ENCODE measurements at regions of chr3 and their contacts with region 1.

Region 1: DNA sequence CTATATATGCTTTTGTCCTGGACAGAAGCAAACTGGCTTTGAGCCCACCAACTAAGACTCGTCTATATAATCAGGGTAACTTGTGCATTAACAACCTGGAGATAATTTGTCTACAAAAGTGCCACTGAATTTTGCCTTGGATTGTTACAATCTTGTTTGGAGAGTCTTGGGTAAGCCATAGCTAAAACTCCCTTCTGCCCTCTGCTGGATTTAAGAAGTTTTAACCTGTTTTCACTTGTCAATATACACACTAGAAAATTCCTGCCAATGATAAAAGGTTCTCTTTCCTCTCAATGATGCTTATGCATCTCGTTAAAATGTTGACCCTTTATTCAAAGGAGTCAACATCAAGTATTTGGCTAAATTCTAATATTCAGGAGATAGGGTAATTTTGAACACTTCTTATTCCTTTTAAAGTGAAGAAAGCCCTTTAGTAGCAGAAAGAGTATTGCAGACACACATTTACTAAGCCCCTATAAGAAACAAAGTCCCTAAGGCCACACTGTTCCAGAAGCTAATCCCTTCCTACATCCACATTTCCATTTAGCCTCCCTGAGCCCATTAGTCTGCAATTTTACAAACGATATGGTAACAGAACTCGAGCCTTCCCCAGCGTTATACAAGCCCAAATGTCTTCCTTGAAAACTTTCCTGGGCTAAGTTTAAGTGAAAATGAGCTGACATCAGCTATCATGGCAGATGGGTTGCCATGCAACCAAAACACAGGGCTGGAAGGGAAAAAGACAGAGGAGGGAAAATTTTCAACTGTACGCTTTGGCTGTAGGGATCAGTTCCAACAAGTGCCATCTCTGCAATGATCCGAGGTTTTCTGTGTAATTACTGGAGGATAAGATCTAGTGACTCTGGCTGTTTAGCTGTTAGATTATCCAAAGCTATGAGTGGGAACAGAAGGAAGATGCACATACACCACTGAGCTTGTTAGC is 75.9 kb upstream of the FGF12 start:
- DNase-seq: peak; percentile 27
- ATAC-seq: peak; percentile 76
- H3K4me3 ChIP-seq: no peak overlapping the region
- H3K27ac ChIP-seq: no peak overlapping the region
- H3K4me1 ChIP-seq: no peaks in the 10 kb centered on the region
- H3K27me3 ChIP-seq: no peaks in the 10 kb centered on the region
- CTCF ChIP-seq: peak; percentile 62
- EP300 ChIP-seq: no peak
- POLR2A ChIP-seq: no peak
- RAD21 ChIP-seq: peak; percentile 28; the same call in 1 of the 2 replicates

Region 2: DNA sequence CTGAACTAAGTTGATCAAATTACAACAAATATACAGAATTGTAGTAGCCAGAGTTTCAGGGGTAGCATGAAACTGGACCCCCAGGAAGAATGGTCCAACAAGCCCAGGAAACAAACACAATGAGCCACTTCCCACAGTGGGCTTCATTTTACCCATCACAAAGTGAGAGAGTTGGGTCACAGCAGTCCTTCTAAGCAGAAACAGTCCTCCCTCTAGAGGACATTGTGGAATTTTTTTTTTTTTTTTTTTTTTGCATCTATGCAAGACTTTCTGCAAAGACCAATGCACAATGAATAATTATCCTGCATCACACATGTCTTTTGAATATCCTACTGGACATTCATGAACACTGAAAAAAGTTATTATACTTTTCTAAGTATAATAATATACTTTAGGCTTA is 649.1 kb after region 1 on chr3:
- CTCF ChIA-PET with region 1: no interaction called
- POLR2A ChIA-PET with region 1: no interaction called
- in situ Hi-C with region 1: loop called (anchors 25 kb)
- intact Hi-C with region 1: no loop called
- DNase-seq: no peak
- ATAC-seq: peak; percentile 41; the same call in 2 of the 3 replicates
- H3K4me3 ChIP-seq: no peak overlapping the region
- H3K27ac ChIP-seq: no peak overlapping the region
- H3K4me1 ChIP-seq: no peaks in the 10 kb centered on the region
- H3K27me3 ChIP-seq: no peaks in the 10 kb centered on the region
- CTCF ChIP-seq: 0 out of 2 replicates have a peak, but pooled peaks have one; percentile 14
- EP300 ChIP-seq: no peak
- POLR2A ChIP-seq: no peak
- RAD21 ChIP-seq: no peak

Region 3: DNA sequence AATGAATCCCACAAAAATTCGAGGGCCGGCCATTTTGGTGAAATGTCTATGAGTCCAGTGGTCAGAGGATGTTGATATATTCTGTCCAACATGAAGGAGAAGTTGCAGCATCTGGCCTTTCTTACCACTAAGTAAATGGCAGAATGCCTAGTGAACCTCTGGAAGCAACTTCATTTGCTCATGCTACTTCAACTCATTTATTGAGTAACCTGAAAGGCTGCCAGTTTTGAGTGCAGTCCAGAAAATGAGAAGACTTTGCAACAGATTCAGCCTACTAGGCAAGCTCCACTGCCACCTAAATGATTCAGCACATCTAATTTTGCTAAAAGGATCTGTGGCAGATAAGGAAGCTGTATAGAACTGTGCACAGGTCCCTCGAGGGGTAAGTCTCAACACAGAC is 1054.8 kb after region 1 on chr3:
- CTCF ChIA-PET with region 1: no interaction called
- POLR2A ChIA-PET with region 1: no interaction called
- in situ Hi-C with region 1: no loop called
- intact Hi-C with region 1: no loop called
- DNase-seq: no peak
- ATAC-seq: no peak
- H3K4me3 ChIP-seq: no peak overlapping the region
- H3K27ac ChIP-seq: no peak overlapping the region
- H3K4me1 ChIP-seq: no peaks in the 10 kb centered on the region
- H3K27me3 ChIP-seq: peaks cover 2 to 15% of the 10 kb centered on the region in 2 experiments; a peak in 4 of 5 replicates
- CTCF ChIP-seq: no peak
- EP300 ChIP-seq: no peak
- POLR2A ChIP-seq: no peak
- RAD21 ChIP-seq: no peak